Sciatic nerve (tissue), 2 donors: ENCODE measurements at regions of chr14 and their contacts with region 1.

Region 1: GRCh38 chr14:34098045-34098984 is 147.4 kb upstream of the EGLN3 start:
- DNase-seq: peak; percentile 70
- ATAC-seq: peak; percentile 74

Region 2: GRCh38 chr14:33839193-33840076 is 258.9 kb before region 1 on chr14:
- intact Hi-C with region 1: loop called (anchors 5 kb)
- DNase-seq: peak; percentile 69
- ATAC-seq: peak; percentile 84